PC-9 (cell line): ENCODE measurements at regions of chr15 and their contacts with region 1.

Region 1: DNA sequence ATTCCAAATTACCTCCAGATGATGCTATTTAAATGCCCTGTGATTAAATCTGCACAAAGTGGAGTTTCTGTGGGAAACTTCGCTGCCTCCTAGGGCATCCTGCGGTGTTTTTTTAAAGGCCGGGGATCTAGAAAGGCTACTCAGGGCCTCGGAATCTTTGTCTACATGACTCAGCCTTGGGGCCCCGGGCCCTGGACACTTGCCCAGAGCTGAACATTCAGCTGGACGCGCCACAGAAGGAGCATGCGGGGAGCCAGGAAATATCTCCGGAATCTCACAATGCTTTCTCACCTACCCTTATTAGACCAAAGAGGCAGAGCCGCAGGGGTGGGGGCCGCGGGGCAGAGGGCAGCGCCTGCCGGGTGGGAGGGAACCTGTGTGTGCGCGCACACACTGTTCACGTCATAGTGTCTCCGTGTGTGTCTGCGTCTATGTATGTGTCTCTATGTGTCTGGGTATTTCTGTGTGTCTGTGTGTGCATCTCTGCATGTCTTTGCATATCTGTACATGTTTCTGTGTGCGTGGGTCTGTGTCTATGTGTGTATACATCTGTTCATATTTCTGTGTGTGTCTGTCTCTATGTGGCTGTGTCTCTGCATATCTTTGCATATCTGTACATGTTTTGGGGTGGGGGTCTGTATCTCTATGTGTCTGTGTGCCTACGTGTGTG is 145.4 kb upstream of the TPM1 start:
- DNase-seq: peak; percentile 93 to 97
- H3K4me3 ChIP-seq: peak overlapping the region; percentile 47; the same call in 1 of the 2 replicates
- H3K27ac ChIP-seq: peak overlapping the region; percentile 100
- H3K4me1 ChIP-seq: peaks cover 81% of the 10 kb centered on the region
- H3K27me3 ChIP-seq: no peaks in the 10 kb centered on the region
- CTCF ChIP-seq: no peak

Region 2: GRCh38 chr15:62770752-62771151 is 126.4 kb before region 1 on chr15:
- CTCF ChIA-PET with region 1: no interaction called
- POLR2A ChIA-PET with region 1: no interaction called
- intact Hi-C with region 1: no loop called
- DNase-seq: peak; percentile 69 to 82
- H3K4me3 ChIP-seq: no peak overlapping the region
- H3K27ac ChIP-seq: peak overlapping the region; percentile 72
- H3K4me1 ChIP-seq: peaks cover 25% of the 10 kb centered on the region
- H3K27me3 ChIP-seq: no peaks in the 10 kb centered on the region
- CTCF ChIP-seq: no peak

Region 3: DNA sequence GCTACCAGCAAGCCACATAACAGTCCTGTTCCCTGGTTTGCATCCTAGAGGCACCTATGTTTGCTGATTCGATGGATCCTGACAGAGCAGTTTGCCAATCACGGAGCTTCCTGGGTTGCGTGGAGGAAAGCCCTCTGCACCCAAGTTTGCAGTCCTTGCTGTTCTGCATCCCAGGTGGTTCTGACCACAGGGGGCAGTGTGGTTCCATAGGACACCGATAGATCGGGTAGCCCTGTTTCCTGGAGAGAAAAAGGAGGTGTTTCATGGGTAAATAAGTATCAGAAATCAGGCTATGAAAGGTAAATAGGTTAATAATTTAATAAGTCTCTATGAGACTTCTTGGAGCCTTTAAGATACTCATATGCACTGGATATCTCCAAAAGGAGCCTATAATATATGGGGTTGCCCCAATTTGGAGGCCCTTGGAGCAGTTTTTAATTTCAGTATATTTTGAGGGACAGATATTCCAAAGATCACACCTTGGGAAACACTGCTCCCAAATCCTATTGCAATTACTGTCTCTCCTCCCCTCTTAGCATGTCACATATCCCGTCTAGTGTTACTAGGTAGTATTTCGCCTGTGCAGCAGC is 49.1 kb before region 1 on chr15:
- CTCF ChIA-PET with region 1: interaction called, 7 read pairs
- POLR2A ChIA-PET with region 1: interaction called, 3 read pairs
- intact Hi-C with region 1: loop called (anchors 1 kb)
- DNase-seq: peak in 1 of 2 experiments; percentile 46
- H3K4me3 ChIP-seq: no peak overlapping the region
- H3K27ac ChIP-seq: peak overlapping the region; percentile 73
- H3K4me1 ChIP-seq: peaks cover 69% of the 10 kb centered on the region
- H3K27me3 ChIP-seq: no peaks in the 10 kb centered on the region
- CTCF ChIP-seq: peak; percentile 75

Region 4: GRCh38 chr15:62958528-62959363 is 61.6 kb after region 1 on chr15:
- CTCF ChIA-PET with region 1: no interaction called
- POLR2A ChIA-PET with region 1: interaction called, 14 read pairs
- intact Hi-C with region 1: no loop called
- DNase-seq: no peak
- H3K4me3 ChIP-seq: no peak overlapping the region
- H3K27ac ChIP-seq: no peak overlapping the region
- H3K4me1 ChIP-seq: no peaks in the 10 kb centered on the region
- H3K27me3 ChIP-seq: no peaks in the 10 kb centered on the region
- CTCF ChIP-seq: no peak

Region 5: DNA sequence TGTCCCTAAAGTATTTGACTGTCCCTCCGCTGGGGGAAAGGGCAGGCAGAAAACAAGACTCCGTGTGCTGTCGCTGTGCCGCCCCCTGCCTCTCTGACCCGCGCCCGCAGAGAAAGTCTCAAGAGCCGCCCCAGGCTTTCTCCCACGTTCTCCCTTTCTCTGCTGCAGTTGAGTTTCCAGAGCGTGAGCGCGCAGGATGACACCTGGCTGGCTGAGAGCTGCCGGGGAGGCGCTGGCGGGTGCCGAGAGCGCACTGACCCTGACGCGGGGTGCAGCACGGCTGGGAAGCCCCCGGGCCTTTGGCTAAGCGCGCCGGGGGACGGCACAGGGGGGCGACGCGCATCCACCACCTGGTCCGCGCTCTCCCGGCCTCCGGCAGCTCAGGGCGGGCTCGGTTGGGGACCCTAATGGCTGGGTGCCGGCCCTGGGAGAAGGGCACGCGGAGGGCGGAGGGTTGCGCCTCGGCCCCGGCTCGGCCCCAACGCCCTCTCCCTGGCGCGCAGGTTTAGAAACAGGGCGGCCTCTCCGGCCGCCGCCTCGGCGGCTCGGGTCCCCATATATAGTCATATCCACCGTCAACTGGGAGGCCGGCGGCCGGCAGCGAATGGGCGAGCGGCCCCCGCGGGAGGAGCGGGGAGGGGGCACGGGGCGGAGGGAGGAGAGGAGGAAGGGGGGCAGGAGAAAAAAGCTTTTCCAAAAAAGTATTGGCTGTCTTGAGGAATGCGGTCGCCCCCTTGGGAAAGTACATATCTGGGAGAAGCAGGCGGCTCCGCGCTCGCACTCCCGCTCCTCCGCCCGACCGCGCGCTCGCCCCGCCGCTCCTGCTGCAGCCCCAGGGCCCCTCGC is 145.1 kb after region 1 on chr15 and contains the start of gene TPM1:
- CTCF ChIA-PET with region 1: no interaction called
- POLR2A ChIA-PET with region 1: interaction called, 40 read pairs
- intact Hi-C with region 1: loop called (anchors 1 kb)
- DNase-seq: peak; percentile 69 to 83
- H3K4me3 ChIP-seq: peak within 1 kb of the TSS; percentile 80
- H3K27ac ChIP-seq: peak within 1 kb of the TSS; percentile 93
- H3K4me1 ChIP-seq: peaks cover 62% of the 10 kb centered on the region
- H3K27me3 ChIP-seq: no peaks in the 10 kb centered on the region
- CTCF ChIP-seq: no peak; the same call in 1 of the 2 replicates
- total RNA-seq, gene TPM1: 174 and 225 TPM in 2 replicates

Region 6: GRCh38 chr15:63107895-63108546 is 210.9 kb after region 1 on chr15:
- CTCF ChIA-PET with region 1: no interaction called
- POLR2A ChIA-PET with region 1: no interaction called
- intact Hi-C with region 1: loop called (anchors 2 kb)
- DNase-seq: peak; percentile 80 to 86
- H3K4me3 ChIP-seq: no peak overlapping the region
- H3K27ac ChIP-seq: peak overlapping the region; percentile 32; the same call in 1 of the 2 replicates
- H3K4me1 ChIP-seq: peaks cover 8% of the 10 kb centered on the region; the same call in 1 of the 2 replicates
- H3K27me3 ChIP-seq: no peaks in the 10 kb centered on the region
- CTCF ChIP-seq: no peak